T-cell (primary cell): ENCODE measurements at regions of chrX and their contacts with region 1.

Region 1: GRCh38 chrX:136694431-136695087 is 46.6 kb downstream of the CD40LG start:
- DNase-seq: peak in 29 of 35 experiments; percentile 13 to 78 (median 36)
- ATAC-seq: peak; percentile 68 to 74 (median 72)
- H3K4me3 ChIP-seq: peak overlapping the region in 1 of 2 donors; percentile 18
- H3K4me3 Mint-ChIP-seq: peak overlapping the region; percentile 66 to 73 (median 70)
- H3K27ac ChIP-seq: peak overlapping the region; percentile 93
- H3K27ac Mint-ChIP-seq: peak overlapping the region; percentile 95 to 99
- H3K4me1 ChIP-seq: peaks cover 24 to 46% of the 10 kb centered on the region in 2 experiments
- H3K4me1 Mint-ChIP-seq: peaks cover 56 to 80% (median 78%) of the 10 kb centered on the region in 3 donors
- H3K27me3 ChIP-seq: no peaks in the 10 kb centered on the region
- H3K27me3 Mint-ChIP-seq: peaks cover 0 to 11% of the 10 kb centered on the region in 2 donors

Region 2: DNA sequence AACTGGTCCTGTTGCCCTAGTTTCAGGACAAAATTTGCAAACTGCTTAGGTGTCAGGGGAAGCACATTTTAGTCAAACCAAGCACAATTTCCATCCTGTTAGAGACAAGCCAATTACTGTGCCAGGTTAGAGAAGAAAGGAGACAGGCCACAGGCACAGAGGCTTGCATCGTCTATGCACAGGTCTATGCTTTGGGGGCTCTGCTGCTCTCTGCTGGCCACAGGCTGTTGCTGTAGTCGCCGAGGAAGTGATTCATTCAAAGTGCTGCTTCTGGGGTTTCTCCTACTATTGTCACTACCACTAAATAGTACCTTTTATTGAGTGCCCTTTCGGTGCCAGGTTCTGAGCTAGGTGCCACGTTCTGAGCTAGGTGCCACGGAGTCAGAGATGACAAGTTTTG is 117.0 kb before region 1 on chrX:
- CTCF ChIA-PET with region 1: interaction called, 5 to 18 read pairs
- POLR2A ChIA-PET with region 1: no interaction called
- DNase-seq: peak; percentile 26 to 78 (median 64)
- ATAC-seq: peak; percentile 97 to 100 (median 100)
- H3K4me3 ChIP-seq: no peak overlapping the region
- H3K4me3 Mint-ChIP-seq: no peak overlapping the region
- H3K27ac ChIP-seq: peak overlapping the region; percentile 53
- H3K27ac Mint-ChIP-seq: peak overlapping the region; percentile 65 to 88
- H3K4me1 ChIP-seq: peaks cover 2 to 11% of the 10 kb centered on the region in 2 experiments
- H3K4me1 Mint-ChIP-seq: peaks cover 13 to 17% (median 13%) of the 10 kb centered on the region in 3 donors
- H3K27me3 ChIP-seq: no peaks in the 10 kb centered on the region
- H3K27me3 Mint-ChIP-seq: peaks cover 0 to 22% of the 10 kb centered on the region in 2 donors

Region 3: GRCh38 chrX:136608295-136609171 is 86.0 kb before region 1 on chrX:
- CTCF ChIA-PET with region 1: interaction called, 8 to 45 read pairs
- POLR2A ChIA-PET with region 1: no interaction called
- DNase-seq: peak; percentile 28 to 78 (median 56)
- ATAC-seq: peak; percentile 71 to 93 (median 80)
- H3K4me3 ChIP-seq: peak overlapping the region in 1 of 2 donors; percentile 19
- H3K4me3 Mint-ChIP-seq: peak overlapping the region; percentile 34 to 53 (median 51)
- H3K27ac ChIP-seq: peak overlapping the region; percentile 55
- H3K27ac Mint-ChIP-seq: peak overlapping the region; percentile 83 to 85
- H3K4me1 ChIP-seq: peaks cover 0 to 20% of the 10 kb centered on the region in 2 experiments
- H3K4me1 Mint-ChIP-seq: peaks cover 29 to 54% (median 36%) of the 10 kb centered on the region in 3 donors
- H3K27me3 ChIP-seq: no peaks in the 10 kb centered on the region
- H3K27me3 Mint-ChIP-seq: peaks cover 0 to 6% of the 10 kb centered on the region in 2 donors

Region 4: DNA sequence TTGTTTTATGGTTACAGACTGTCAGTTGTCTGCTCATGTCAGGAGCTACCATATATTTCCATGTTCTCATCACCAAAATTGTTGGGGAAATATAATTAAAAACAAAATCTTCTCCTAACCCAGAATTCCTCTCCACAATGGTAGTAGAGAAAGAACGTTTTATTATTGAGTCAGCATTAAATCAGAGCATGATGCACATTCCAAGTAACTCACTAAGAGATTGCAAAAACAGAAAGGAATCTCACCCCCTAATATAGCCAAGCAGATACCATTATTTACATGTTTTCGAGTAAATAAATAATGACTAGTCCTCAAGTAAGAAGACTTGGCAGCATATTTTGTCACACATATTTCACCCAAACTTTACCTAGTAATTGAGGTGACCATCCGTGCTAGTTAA is 122.4 kb after region 1 on chrX:
- CTCF ChIA-PET with region 1: no interaction called
- POLR2A ChIA-PET with region 1: no interaction called
- DNase-seq: no peak
- ATAC-seq: no peak
- H3K4me3 ChIP-seq: no peak overlapping the region
- H3K4me3 Mint-ChIP-seq: no peak overlapping the region
- H3K27ac ChIP-seq: no peak overlapping the region
- H3K27ac Mint-ChIP-seq: no peak overlapping the region
- H3K4me1 ChIP-seq: no peaks in the 10 kb centered on the region
- H3K4me1 Mint-ChIP-seq: no peaks in the 10 kb centered on the region
- H3K27me3 ChIP-seq: no peaks in the 10 kb centered on the region
- H3K27me3 Mint-ChIP-seq: peaks cover 0 to 8% of the 10 kb centered on the region in 2 donors